ENCODE measurements at regions of chr2 and their contacts with region 1.

Region 1: DNA sequence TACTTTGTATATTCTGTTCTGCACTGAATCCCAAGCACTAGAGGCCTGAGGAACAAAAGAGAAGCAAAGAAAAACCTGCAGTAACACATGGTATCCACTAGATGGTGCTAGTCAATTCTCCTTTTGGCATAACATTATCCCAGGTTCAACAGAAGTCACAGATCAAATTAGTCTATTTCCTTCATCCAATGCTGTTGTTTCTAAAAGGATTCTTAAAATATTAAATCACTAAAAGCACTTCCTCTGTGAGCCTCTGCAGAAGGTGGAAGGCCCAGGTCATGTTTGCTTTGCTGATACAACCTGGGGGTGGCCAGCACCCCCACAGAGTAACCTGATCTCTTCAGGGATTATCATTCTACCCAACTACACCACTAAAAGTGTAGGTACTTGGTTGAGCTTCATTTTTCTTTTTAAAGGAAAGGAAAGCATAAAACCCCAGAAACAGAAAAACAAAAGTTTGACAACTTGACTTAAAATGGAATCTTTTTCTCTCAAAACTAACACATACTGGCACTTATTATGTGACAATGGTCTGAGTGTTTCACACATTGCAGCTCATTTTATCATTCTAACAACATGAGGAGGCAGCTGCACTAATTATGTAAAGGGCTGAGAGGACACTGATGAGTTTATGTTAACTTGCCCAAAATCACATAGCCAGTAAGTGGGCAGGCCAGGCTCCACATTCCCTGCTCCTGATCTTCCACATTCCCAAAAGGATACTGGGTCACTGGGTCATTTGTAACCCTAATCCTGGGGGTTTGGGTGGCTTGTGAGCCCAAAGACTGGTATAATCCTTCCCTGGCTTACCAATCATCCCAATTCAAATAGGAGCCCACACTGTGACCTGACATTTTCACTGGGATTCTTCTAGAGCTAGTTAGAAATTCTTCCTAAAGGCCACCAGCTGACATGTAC is 66.8 kb upstream of the DNER start:
- DNase-seq: peak; percentile 77
- ATAC-seq: peak; percentile 85
- H3K4me3 ChIP-seq: no peak overlapping the region
- H3K27ac ChIP-seq: no peak overlapping the region; the same call in 1 of the 2 replicates
- H3K4me1 ChIP-seq: peaks cover 8% of the 10 kb centered on the region
- H3K27me3 ChIP-seq: no peaks in the 10 kb centered on the region
- CTCF ChIP-seq: peak; percentile 80
- POLR2A ChIP-seq: no peak
- RAD21 ChIP-seq: peak; percentile 46

Region 2: DNA sequence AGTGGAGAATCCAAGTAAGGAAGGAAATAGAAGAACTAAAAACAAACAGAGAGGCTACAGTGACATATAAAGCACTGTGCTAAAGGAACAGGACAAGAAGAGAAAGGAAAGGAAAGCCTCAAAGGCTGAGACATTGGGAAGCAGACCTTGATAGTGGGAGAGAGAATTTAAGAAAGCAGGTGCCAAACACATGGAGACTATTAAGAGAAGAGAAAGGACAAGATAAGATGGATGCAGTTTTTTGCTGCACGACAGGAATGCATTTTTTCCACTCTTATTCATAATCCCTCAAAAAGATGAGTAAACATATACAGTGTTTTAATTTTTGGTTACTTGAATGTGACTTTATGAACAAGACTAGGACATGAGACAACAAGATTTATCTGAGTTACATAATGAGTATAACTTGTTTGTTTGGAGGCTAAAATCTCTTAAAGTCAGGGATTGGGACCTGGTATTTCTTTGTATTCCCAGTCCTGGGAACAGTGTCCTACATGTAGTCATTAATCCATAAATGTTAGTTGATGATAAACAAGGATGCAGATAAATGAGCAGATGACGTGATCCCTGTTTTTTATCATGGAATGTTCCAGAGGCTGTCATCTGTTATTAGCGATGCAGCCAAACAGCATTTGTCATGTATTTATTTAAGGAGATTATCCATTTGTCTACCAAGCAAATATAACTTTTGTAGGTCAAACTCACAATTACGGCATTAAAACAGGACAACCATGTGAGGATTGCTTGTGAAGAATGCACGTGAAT is 208.4 kb before region 1 on chr2:
- CTCF ChIA-PET with region 1: no interaction called
- POLR2A ChIA-PET with region 1: no interaction called
- dilution Hi-C with region 1: no loop called
- in situ Hi-C with region 1: no loop called
- intact Hi-C with region 1: no loop called
- DNase-seq: no peak
- ATAC-seq: no peak
- H3K4me3 ChIP-seq: no peak overlapping the region
- H3K27ac ChIP-seq: no peak overlapping the region
- H3K4me1 ChIP-seq: no peaks in the 10 kb centered on the region
- H3K27me3 ChIP-seq: no peaks in the 10 kb centered on the region
- CTCF ChIP-seq: no peak
- POLR2A ChIP-seq: no peak
- RAD21 ChIP-seq: no peak

Region 3: DNA sequence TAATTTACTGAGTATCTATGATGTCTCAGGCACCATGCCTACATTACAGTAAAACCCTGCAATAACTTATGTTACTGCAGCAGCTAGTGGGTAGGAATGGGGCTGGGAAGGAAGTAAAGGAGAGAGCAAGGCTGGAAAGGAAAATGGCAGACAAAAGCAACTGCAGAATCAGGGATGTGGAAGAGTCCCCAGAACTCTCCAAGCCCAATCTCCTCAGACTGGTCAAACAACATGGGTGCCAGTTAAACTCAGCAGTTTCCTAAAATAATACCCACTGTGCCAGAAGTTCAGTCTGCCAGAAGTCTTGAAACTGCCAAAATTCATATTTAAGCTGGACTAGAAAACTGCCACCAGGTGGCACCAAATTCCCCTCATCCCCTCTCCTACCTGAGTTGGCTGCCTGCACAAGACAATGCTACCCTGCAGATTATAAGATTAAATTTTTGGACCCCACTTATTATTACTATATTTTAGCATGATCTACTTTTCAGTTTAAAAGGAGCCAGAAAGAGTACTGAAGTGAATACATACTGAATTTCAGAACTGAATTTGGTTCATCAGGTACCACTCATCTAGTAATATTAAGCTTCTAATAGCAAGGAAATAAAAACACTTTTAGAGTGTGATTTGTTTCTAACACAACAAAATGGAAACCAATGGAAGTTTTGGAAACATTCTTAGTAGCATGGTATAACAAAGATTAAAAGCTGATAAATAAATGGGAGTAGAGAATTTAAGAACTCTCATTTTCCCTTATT is 20.1 kb after region 1 on chr2:
- CTCF ChIA-PET with region 1: interaction called, 10 read pairs
- POLR2A ChIA-PET with region 1: no interaction called
- dilution Hi-C with region 1: no loop called
- in situ Hi-C with region 1: no loop called
- intact Hi-C with region 1: no loop called
- DNase-seq: peak; percentile 65
- ATAC-seq: peak; percentile 45
- H3K4me3 ChIP-seq: no peak overlapping the region
- H3K27ac ChIP-seq: peak overlapping the region; percentile 45; the same call in 1 of the 2 replicates
- H3K4me1 ChIP-seq: peaks cover 2% of the 10 kb centered on the region; the same call in 1 of the 2 replicates
- H3K27me3 ChIP-seq: no peaks in the 10 kb centered on the region
- CTCF ChIP-seq: peak; percentile 63
- POLR2A ChIP-seq: no peak
- RAD21 ChIP-seq: peak; percentile 56

Region 4: GRCh38 chr2:229821316-229821715 is 40.2 kb after region 1 on chr2:
- CTCF ChIA-PET with region 1: interaction called, 3 read pairs
- POLR2A ChIA-PET with region 1: no interaction called
- dilution Hi-C with region 1: no loop called
- in situ Hi-C with region 1: no loop called
- intact Hi-C with region 1: loop called (anchors 5 kb)
- DNase-seq: no peak
- ATAC-seq: no peak
- H3K4me3 ChIP-seq: no peak overlapping the region
- H3K27ac ChIP-seq: no peak overlapping the region
- H3K4me1 ChIP-seq: no peaks in the 10 kb centered on the region
- H3K27me3 ChIP-seq: no peaks in the 10 kb centered on the region
- CTCF ChIP-seq: no peak
- POLR2A ChIP-seq: no peak
- RAD21 ChIP-seq: no peak

Measured in IMR-90 (cell line).